Panc1 (cell line): ENCODE measurements at regions of chr2 and their contacts with region 1.

Region 1: DNA sequence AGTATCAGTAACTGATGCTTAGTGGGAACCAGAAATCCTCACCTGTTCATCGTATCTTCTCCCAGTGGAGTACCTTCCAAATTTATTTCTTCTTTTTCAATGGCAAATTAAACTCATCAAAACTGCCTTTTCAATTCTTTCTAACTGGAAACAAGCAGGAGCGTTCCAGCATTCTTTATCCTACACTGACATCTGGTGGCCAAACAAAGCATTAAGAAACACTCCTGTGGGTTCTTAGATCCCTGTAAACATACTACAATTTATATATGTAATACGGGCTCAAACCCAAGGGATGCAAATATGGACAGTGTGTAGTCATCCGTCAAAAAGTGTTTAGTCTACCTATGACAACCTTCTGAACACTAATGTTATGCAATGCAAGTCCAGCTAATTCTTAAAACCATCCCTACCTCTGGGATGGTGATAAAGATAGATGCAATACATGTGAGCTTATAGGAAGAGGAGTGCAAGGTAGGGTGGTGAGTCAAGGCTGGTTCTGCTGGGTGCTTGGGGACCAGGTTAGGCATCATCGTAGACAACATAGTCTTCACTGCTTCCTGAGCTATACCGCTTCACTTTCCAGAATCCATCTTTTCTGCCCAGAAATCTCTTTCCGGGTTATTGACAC is 375.0 kb downstream of the CTNNA2 start:
- DNase-seq: peak; percentile 39
- ATAC-seq: peak; percentile 77; the same call in 1 of the 2 replicates
- H3K4me3 ChIP-seq: no peak overlapping the region
- H3K27ac ChIP-seq: no peak overlapping the region
- H3K4me1 ChIP-seq: no peaks in the 10 kb centered on the region
- H3K27me3 ChIP-seq: peaks cover 2% of the 10 kb centered on the region
- CTCF ChIP-seq: peak; percentile 67; the same call in 1 of the 2 replicates

Region 2: DNA sequence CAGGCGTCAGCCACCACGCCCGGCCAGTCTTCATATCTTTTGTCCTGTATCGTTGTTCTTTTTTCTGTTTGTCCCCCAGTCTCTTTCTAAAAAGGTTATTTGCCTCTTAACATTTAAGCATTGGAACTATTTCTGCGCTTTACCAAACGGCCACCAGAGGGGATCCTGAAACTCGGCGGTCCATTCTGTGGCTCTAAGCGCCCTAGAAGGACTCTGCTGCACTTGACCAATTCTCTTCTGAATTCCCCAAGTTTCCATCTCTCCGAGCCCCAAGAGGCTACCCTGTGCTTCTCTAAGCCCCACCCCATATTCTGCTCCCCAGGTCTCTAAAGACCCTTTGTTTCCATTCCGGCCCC is 895.4 kb before region 1 on chr2:
- CTCF ChIA-PET with region 1: no interaction called
- POLR2A ChIA-PET with region 1: no interaction called
- in situ Hi-C with region 1: no loop called
- intact Hi-C with region 1: loop called (anchors 2 kb)
- DNase-seq: no peak
- ATAC-seq: peak; percentile 89
- H3K4me3 ChIP-seq: peak overlapping the region; percentile 9 to 18; a peak in 3 of 4 replicates
- H3K27ac ChIP-seq: no peak overlapping the region
- H3K4me1 ChIP-seq: no peaks in the 10 kb centered on the region
- H3K27me3 ChIP-seq: peaks cover 5% of the 10 kb centered on the region
- CTCF ChIP-seq: peak; percentile 77

Region 3: DNA sequence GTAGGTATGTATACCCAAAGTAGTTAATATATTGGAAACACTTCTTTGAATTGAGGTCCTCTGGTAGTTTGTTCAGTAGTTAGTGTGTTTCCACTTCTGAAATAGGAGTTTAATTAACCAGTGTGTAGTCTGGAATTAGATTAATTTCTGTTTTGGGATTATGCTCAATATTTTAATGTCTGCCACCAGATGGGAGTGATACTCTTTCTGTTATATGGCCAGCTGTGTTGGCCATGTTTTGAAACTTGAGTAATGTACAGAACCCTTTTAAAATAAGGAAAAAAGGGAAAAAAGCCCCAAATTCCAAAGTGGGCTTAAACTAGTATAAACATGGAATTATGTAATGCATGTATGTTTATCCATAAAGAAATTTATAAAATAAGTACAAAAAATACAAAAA is 227.3 kb before region 1 on chr2:
- CTCF ChIA-PET with region 1: no interaction called
- POLR2A ChIA-PET with region 1: no interaction called
- in situ Hi-C with region 1: no loop called
- intact Hi-C with region 1: no loop called
- DNase-seq: no peak
- ATAC-seq: no peak
- H3K4me3 ChIP-seq: no peak overlapping the region
- H3K27ac ChIP-seq: no peak overlapping the region
- H3K4me1 ChIP-seq: no peaks in the 10 kb centered on the region
- H3K27me3 ChIP-seq: no peaks in the 10 kb centered on the region
- CTCF ChIP-seq: no peak

Region 4: GRCh38 chr2:79855264-79856006 is 32.4 kb before region 1 on chr2:
- CTCF ChIA-PET with region 1: no interaction called
- POLR2A ChIA-PET with region 1: no interaction called
- in situ Hi-C with region 1: no loop called
- intact Hi-C with region 1: no loop called
- DNase-seq: no peak
- ATAC-seq: peak; percentile 78
- H3K4me3 ChIP-seq: no peak overlapping the region
- H3K27ac ChIP-seq: no peak overlapping the region
- H3K4me1 ChIP-seq: no peaks in the 10 kb centered on the region
- H3K27me3 ChIP-seq: no peaks in the 10 kb centered on the region
- CTCF ChIP-seq: peak; percentile 74